Activated naive CD4-positive, alpha-beta T cell treated with anti-CD3 and anti-CD28 coated beads for 36 hours (primary cell): ENCODE measurements at regions of chr9 and their contacts with region 1.

Region 1: GRCh38 chr9:3181049-3181953 is 337.4 kb upstream of the PUM3 start:
- DNase-seq: peak; percentile 72
- H3K4me3 Mint-ChIP-seq: peak overlapping the region; percentile 61
- H3K27ac Mint-ChIP-seq: no peak overlapping the region
- H3K4me1 Mint-ChIP-seq: peaks cover 2% of the 10 kb centered on the region
- H3K27me3 Mint-ChIP-seq: peaks cover 42% of the 10 kb centered on the region

Region 2: GRCh38 chr9:2857564-2858198 is 323.6 kb before region 1 on chr9:
- CTCF ChIA-PET with region 1: interaction called, 19 read pairs
- intact Hi-C with region 1: loop called (anchors 1 kb)
- DNase-seq: peak; percentile 84
- H3K4me3 Mint-ChIP-seq: no peak overlapping the region
- H3K27ac Mint-ChIP-seq: no peak overlapping the region
- H3K4me1 Mint-ChIP-seq: peaks cover 6% of the 10 kb centered on the region
- H3K27me3 Mint-ChIP-seq: peaks cover 18% of the 10 kb centered on the region

Region 3: GRCh38 chr9:2872257-2872935 is 308.9 kb before region 1 on chr9:
- CTCF ChIA-PET with region 1: interaction called, 4 read pairs
- intact Hi-C with region 1: loop called (anchors 1 kb)
- DNase-seq: peak; percentile 16
- H3K4me3 Mint-ChIP-seq: no peak overlapping the region
- H3K27ac Mint-ChIP-seq: no peak overlapping the region
- H3K4me1 Mint-ChIP-seq: peaks cover 18% of the 10 kb centered on the region
- H3K27me3 Mint-ChIP-seq: no peaks in the 10 kb centered on the region